ENCODE measurements at regions of chr11 and their contacts with region 1.

Region 1: GRCh38 chr11:67022328-67022927 is 506 bp upstream of the SYT12 start:
- DNase-seq: no peak
- ATAC-seq: no peak
- H3K4me3 Mint-ChIP-seq: peak overlapping the region; percentile 69
- H3K27ac Mint-ChIP-seq: no peak overlapping the region
- H3K4me1 Mint-ChIP-seq: peaks cover 14% of the 10 kb centered on the region
- H3K27me3 Mint-ChIP-seq: peaks cover 41% of the 10 kb centered on the region
- CTCF ChIP-seq: no peak

Region 2: GRCh38 chr11:66855574-66856495 is 166.6 kb before region 1 on chr11:
- CTCF ChIA-PET with region 1: interaction called, 17 read pairs
- POLR2A ChIA-PET with region 1: interaction called, 4 read pairs
- DNase-seq: peak; percentile 97
- ATAC-seq: peak; percentile 74
- H3K4me3 Mint-ChIP-seq: peak overlapping the region; percentile 87
- H3K27ac Mint-ChIP-seq: peak overlapping the region; percentile 99
- H3K4me1 Mint-ChIP-seq: peaks cover 17% of the 10 kb centered on the region
- H3K27me3 Mint-ChIP-seq: no peaks in the 10 kb centered on the region
- CTCF ChIP-seq: no peak

Region 3: GRCh38 chr11:66892911-66893310 is 129.5 kb before region 1 on chr11:
- CTCF ChIA-PET with region 1: interaction called, 13 read pairs
- POLR2A ChIA-PET with region 1: interaction called, 3 read pairs
- DNase-seq: no peak
- ATAC-seq: no peak
- H3K4me3 Mint-ChIP-seq: no peak overlapping the region
- H3K27ac Mint-ChIP-seq: no peak overlapping the region
- H3K4me1 Mint-ChIP-seq: peaks cover 28% of the 10 kb centered on the region
- H3K27me3 Mint-ChIP-seq: no peaks in the 10 kb centered on the region
- CTCF ChIP-seq: no peak

Region 4: DNA sequence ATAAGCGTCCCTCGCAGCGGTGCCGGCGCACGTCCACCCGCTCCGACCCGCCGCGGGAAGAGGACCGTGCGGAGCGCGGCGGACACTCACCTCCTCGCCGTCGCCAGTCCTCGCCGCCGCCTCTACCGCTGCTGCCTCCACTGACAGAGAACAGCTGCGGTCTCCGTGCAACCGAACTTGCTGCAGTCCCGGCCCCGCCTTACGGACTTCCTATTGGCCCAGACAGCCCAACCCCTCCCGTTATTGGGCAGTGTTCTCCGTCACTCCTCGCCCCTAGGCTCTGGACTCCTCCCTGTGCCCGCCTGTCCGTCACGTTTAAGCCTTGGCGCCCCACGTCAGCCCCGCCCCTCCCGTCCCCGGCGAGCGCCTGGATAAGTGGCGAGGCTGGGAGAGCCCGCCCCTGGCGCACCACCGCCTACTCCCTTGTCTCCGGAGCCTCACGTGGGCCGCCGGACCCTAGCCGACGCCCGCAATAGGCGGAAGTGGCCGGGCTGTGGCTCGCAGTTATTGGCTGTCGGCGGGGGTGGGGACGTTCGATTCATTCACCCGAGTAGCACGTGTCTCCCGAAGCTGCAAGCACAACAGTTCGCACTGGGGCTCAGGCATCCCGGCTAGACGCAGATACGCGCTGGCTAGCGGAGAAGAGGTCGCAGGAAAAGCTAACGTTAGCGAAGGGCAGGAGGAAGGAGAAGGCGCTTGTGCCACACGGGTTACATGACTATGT is 64.0 kb before region 1 on chr11 and contains the start of gene PC:
- CTCF ChIA-PET with region 1: interaction called, 26 read pairs
- POLR2A ChIA-PET with region 1: interaction called, 6 read pairs
- DNase-seq: peak; percentile 100
- ATAC-seq: peak; percentile 96
- H3K4me3 Mint-ChIP-seq: peak within 1 kb of the TSS; percentile 87
- H3K27ac Mint-ChIP-seq: peak within 1 kb of the TSS; percentile 99
- H3K4me1 Mint-ChIP-seq: peaks cover 26% of the 10 kb centered on the region
- H3K27me3 Mint-ChIP-seq: peaks cover 17% of the 10 kb centered on the region
- CTCF ChIP-seq: no peak
- total RNA-seq, gene PC: 22.1 to 27.2 TPM (median 25.6 TPM) in 3 replicates

Region 5: DNA sequence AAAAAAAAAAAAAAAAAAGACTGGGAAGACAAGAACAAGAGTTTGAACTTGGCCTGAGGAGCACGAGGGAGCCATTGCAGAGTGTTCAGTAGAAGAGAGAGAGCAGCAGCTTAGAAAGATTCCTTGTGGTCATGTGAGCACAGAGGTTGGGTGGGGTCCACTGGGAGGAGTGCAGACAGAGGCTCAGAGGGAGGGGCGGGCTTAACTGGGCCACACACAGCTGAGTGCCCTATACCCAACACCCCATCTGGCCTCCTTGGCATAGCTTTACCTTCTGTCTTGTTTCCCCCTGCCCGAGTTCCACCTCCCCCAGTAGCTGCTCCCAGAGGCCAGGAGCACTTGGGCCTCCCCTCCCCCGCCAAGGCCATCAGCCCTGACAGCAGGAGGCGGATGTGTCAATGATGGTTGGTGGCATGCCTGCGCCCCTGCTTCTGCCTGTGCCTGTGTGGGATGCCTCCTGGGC is 35.2 kb before region 1 on chr11:
- CTCF ChIA-PET with region 1: interaction called, 16 read pairs
- POLR2A ChIA-PET with region 1: interaction called, 3 read pairs
- DNase-seq: peak; percentile 65
- ATAC-seq: peak; percentile 84
- H3K4me3 Mint-ChIP-seq: no peak overlapping the region
- H3K27ac Mint-ChIP-seq: no peak overlapping the region; the same call in 1 of the 2 replicates
- H3K4me1 Mint-ChIP-seq: peaks cover 27% of the 10 kb centered on the region
- H3K27me3 Mint-ChIP-seq: no peaks in the 10 kb centered on the region; the same call in 1 of the 2 replicates
- CTCF ChIP-seq: no peak

Region 6: DNA sequence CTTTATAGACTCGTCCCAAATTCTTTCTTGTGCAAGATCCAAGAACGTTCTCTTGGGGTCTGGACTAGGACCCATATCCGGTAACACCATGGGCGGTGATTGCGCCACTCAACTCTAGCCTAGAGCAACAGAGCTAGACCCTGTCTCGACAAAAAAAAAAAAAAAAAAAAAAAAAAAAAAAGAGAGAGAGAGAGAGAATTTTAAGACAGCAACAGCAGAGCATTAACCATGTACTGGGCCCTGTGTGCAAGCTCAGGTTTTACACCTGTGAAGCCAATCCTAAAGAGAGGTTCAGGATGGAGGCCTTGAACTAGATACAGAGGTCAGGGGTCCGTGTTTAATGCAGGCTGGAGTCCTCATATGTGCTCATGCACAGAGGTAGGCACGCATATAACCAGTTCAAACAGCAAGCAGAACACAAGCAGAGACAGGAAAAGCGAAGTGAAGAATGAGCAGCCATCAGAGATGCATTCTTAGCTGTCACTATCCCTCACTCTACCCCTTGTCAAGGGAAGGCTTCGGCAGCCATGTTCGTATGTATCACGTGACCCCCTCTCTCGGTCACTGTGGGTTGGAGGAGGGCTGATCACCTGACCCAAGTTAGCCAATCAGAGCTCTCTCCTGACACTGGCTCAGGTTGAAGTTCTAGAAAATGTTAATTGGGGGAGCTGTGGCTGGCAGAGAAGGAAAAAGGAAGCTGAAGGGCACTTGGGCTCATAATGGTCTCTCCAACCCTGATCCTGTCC is 16.1 kb before region 1 on chr11:
- CTCF ChIA-PET with region 1: interaction called, 26 read pairs
- POLR2A ChIA-PET with region 1: interaction called, 6 read pairs
- DNase-seq: peak; percentile 69
- ATAC-seq: peak; percentile 48
- H3K4me3 Mint-ChIP-seq: peak overlapping the region; percentile 37
- H3K27ac Mint-ChIP-seq: peak overlapping the region; percentile 66
- H3K4me1 Mint-ChIP-seq: peaks cover 30% of the 10 kb centered on the region
- H3K27me3 Mint-ChIP-seq: no peaks in the 10 kb centered on the region
- CTCF ChIP-seq: no peak

Region 7: DNA sequence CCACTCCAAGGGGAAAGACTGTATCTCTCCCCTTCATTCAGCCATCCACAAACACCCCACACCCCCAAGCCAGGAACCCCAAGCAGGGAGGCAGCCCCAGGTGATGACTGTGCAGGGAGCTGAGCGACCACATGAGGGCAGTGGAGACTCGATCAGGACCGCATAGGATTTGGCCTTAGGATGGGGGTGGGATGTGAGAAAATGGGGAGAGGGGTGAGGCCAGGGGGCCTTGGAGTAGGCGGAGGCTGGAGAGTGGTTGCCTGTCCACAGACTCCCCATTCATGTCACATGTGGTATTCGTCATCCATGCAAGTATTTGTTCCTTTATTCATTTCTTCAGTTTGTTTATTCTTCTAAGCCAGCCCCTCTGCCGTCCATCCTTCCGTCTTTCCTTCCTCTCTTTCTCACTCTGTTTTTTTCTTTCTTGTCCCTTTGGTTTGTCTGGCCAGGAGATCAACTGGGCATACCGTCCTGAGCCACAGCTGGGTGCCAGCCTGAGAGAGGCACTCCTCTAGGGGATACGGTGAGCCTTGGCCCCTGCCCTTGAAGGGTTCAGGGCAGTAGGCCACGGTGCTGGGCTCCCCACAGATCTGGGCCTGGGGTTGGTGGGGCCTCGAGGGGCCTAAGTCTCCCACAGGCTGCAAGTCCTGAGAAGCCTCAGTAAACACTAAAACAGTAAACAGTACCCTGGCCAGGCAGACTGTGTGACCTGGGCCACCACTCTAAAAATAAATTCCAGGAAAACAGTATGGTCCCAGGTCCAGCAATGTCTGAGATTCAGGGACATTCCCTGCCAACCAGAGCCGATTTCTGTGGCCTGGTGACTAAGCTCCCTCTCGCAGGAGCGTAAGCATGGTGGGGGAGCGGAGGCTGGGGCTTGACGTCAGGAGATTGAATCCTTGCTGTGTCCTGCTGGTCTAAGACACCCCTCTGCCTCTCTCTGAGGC is 31.7 kb after region 1 on chr11:
- CTCF ChIA-PET with region 1: interaction called, 22 read pairs
- POLR2A ChIA-PET with region 1: no interaction called
- DNase-seq: peak; percentile 83
- ATAC-seq: peak; percentile 72
- H3K4me3 Mint-ChIP-seq: no peak overlapping the region
- H3K27ac Mint-ChIP-seq: no peak overlapping the region
- H3K4me1 Mint-ChIP-seq: peaks cover 23% of the 10 kb centered on the region
- H3K27me3 Mint-ChIP-seq: no peaks in the 10 kb centered on the region; the same call in 1 of the 2 replicates
- CTCF ChIP-seq: peak; percentile 49

Region 8: DNA sequence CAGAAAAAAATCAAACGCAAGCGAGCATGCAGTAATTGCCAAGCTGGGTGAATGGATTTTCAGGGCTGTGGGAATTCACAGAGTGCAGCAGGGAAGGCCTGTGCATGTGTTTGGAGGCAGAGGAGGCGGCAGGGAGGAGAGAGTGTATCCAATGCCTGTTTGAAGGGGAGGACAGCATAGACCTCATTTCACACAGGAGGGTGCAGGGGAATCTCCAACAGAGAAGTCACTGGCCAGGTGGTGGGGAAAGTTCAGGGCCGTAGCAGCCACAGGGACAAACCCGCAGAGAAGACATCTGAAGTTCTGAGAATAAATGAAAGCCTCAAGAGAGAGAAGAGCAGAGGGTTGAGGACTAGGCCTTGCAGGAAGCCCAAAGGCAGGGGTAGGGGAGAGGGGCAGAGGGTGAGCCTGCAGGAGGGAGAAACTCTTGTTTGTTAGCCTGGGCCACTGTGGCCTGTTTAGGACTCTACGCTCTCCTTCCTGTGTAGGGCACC is 77.5 kb after region 1 on chr11:
- CTCF ChIA-PET with region 1: no interaction called
- POLR2A ChIA-PET with region 1: no interaction called
- DNase-seq: no peak
- ATAC-seq: no peak
- H3K4me3 Mint-ChIP-seq: no peak overlapping the region
- H3K27ac Mint-ChIP-seq: peak overlapping the region; percentile 63
- H3K4me1 Mint-ChIP-seq: peaks cover 21% of the 10 kb centered on the region
- H3K27me3 Mint-ChIP-seq: no peaks in the 10 kb centered on the region
- CTCF ChIP-seq: no peak

Measured in WTC11 (cell line).